ENCODE measurements at regions of chr2 and their contacts with region 1.

Region 1: DNA sequence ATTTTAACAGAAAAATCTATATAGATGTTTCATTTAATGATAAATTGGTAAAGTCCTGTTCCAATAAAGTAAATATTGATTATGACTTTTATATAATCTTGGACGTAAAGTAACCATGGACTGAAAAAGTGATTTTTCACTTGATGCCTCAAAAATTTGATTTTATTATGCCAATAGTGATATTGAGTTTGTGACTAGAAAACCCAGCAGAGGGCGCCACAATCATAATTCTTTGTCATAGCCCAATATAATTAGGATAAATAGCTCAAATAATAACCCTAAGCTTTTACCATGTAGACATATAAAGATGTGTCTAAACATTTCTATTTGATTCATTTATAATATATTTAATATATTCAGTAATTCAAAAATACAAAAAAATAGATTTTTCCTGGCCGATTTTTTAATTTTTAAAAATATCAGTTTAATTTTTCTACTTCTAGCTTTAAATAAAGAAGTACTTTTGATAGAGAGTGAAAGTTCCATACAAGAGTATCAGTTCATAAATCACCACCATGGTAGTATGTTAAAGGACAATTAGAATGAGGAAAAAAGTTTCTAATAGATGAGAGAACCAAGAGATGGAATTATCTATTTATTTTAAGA is 30.7 kb downstream of the CAMKMT start:
- DNase-seq: peak in 2 of 4 donors; percentile 35 to 52
- ATAC-seq: no peak
- H3K4me3 ChIP-seq: no peak overlapping the region
- H3K27ac ChIP-seq: no peak overlapping the region
- H3K4me1 ChIP-seq: no peaks in the 10 kb centered on the region
- H3K27me3 ChIP-seq: no peaks in the 10 kb centered on the region
- CTCF ChIP-seq: peak; percentile 40 to 60

Region 2: GRCh38 chr2:44184106-44184505 is 208.3 kb before region 1 on chr2:
- intact Hi-C with region 1: no loop called
- DNase-seq: no peak
- ATAC-seq: peak; percentile 16
- H3K4me3 ChIP-seq: no peak overlapping the region
- H3K27ac ChIP-seq: no peak overlapping the region
- H3K4me1 ChIP-seq: peaks cover 0 to 80% of the 10 kb centered on the region in 2 donors
- H3K27me3 ChIP-seq: no peaks in the 10 kb centered on the region
- CTCF ChIP-seq: no peak

Region 3: DNA sequence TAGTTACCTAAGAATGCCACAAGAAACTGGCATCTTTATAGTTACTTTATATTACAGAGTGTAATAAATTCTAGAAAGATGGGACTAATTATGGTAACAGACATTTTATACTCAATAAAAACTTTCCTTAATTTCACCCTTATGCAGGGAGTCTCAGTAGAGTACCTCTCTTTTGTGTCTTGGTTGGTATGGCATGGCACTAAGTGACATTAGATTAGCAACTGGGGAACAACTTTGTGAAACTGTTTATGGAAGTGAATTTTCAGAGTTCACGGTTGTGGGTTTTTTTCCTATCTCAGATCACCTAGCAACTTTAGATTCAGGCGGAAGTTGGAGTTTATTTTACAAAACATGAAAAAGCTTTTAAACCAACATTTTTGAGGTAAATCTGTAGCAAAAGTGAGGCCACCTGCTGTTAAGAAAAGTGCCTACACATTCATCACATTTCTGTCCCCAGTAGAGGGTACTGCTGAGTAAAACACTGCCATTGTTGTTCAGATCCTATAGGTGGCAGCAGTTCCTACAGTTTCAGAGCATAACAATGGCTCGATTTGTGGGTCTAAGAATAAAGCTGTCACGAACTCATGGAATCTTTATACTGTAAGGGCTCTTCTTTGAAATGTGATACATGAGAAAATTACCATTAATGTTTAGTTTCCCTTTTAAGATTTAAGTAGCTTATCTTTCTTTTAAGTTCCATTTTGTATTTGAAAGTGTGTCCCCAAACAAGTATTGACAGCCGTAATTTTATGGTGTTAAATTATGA is 86.9 kb after region 1 on chr2:
- intact Hi-C with region 1: loop called in 1 of 2 experiments (anchors 10 kb)
- DNase-seq: peak in 2 of 4 donors; percentile 67 to 85
- ATAC-seq: peak; percentile 100
- H3K4me3 ChIP-seq: no peak overlapping the region
- H3K27ac ChIP-seq: no peak overlapping the region
- H3K4me1 ChIP-seq: no peaks in the 10 kb centered on the region
- H3K27me3 ChIP-seq: no peaks in the 10 kb centered on the region
- CTCF ChIP-seq: peak; percentile 87 to 99

Region 4: DNA sequence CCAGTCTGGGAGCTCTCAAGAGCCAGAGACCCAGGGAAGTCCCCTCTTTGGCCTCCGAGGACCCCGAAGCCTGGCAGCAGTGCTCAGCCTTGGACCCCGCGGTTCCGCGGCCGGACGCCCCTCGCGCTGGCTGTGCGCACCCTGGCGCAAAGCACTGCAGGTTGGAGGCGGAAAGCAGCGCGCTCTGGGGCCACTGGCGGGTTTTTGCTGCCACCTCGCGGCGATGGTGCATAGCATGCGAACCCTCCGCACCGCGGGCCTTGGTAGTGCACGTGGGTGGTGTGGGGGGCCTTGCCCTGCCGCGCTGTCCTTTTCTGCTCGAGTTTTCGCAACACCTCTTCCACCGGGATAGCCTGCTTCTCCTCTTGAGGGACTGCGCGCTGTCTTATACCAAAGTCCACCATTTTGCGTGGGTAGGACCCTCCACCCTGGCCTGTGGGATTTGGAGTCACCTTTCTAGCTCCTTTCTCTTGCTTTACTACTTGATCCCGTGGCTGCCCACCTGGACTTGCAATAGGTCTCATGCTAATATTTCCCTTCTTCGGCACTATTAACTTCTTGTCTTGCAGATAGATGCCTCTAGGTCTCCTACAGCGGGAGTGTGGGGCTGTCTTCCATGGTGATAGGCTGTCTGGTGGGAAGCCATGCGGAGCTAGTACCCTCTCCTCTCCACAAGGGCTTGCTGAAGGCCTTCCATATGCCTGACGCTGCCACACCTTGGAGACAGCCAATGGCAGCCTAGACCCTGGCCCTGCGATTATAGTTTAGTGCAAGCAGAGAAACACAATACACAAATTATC is 563.4 kb after region 1 on chr2:
- intact Hi-C with region 1: loop called in 1 of 2 experiments (anchors 10 kb)
- DNase-seq: peak; percentile 65 to 94 (median 76)
- ATAC-seq: peak; percentile 87
- H3K4me3 ChIP-seq: no peak overlapping the region
- H3K27ac ChIP-seq: no peak overlapping the region
- H3K4me1 ChIP-seq: peaks cover 16 to 30% of the 10 kb centered on the region in 2 donors
- H3K27me3 ChIP-seq: peaks cover 44 to 93% of the 10 kb centered on the region in 2 donors
- CTCF ChIP-seq: peak; percentile 84 to 91

Measured in left lung (tissue), 14 donors.